SK-N-SH (cell line): ENCODE measurements at regions of chr17 and their contacts with region 1.

Region 1: GRCh38 chr17:79305768-79306423 is 231.3 kb downstream of the ENGASE start:
- DNase-seq: peak; percentile 95
- H3K4me3 ChIP-seq: no peak overlapping the region
- H3K27ac ChIP-seq: peak overlapping the region in 1 of 2 experiments; percentile 91; a peak in 2 of 4 replicates
- H3K4me1 ChIP-seq: peaks cover 0 to 24% of the 10 kb centered on the region in 2 experiments; a peak in 2 of 4 replicates
- H3K27me3 ChIP-seq: 0 out of 2 replicates have a peak, but pooled peaks cover 9% of the 10 kb centered on the region
- CTCF ChIP-seq: no peak
- EP300 ChIP-seq: peak in 1 of 2 experiments; percentile 65; a peak in 2 of 4 replicates
- RAD21 ChIP-seq: no peak

Region 2: GRCh38 chr17:79154951-79155585 is 150.8 kb before region 1 on chr17:
- CTCF ChIA-PET with region 1: no interaction called
- POLR2A ChIA-PET with region 1: no interaction called
- DNase-seq: peak; percentile 71
- H3K4me3 ChIP-seq: no peak overlapping the region
- H3K27ac ChIP-seq: no peak overlapping the region
- H3K4me1 ChIP-seq: peaks cover 0 to 11% of the 10 kb centered on the region in 2 experiments; a peak in 1 of 4 replicates
- H3K27me3 ChIP-seq: peaks cover 31% of the 10 kb centered on the region
- CTCF ChIP-seq: no peak
- EP300 ChIP-seq: no peak
- RAD21 ChIP-seq: no peak

Region 3: DNA sequence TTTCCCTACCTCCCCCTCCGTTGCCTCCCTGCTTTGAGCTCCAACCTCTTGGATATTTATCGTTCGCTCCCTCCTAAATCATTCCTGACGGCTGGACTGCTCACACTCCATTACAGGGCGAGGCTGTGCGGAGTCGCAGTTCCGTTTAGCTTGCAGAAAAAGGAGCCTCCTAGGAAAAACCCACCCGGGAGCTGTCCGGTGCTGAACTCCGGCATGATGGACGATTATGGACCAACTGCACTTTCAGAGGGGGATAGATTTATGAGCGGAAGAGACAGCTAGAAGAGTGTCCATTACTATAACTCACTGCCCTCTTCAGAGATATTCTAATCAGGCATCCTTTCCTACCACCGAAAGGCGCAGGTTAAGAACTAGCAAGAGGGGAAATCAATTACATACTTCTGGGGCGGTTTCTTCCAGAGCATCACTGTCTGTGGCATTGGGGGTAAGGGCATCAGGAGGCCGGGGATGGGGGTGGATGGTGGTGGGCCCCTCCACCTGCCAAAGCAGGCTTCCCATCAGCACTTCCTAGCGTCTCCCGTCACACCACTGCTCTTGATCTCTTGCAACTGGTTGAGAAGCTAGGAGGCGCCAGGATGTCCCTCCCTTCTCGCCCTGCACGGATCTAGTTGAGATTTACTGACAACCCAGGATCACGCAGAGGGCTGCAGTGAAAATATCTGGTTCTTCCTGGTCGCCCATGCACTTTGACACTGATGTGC is 20.0 kb after region 1 on chr17:
- CTCF ChIA-PET with region 1: interaction called, 14 read pairs
- POLR2A ChIA-PET with region 1: no interaction called
- DNase-seq: no peak
- H3K4me3 ChIP-seq: no peak overlapping the region
- H3K27ac ChIP-seq: no peak overlapping the region
- H3K4me1 ChIP-seq: no peaks in the 10 kb centered on the region; a peak in 1 of 4 replicates
- H3K27me3 ChIP-seq: no peaks in the 10 kb centered on the region
- CTCF ChIP-seq: no peak
- EP300 ChIP-seq: no peak
- RAD21 ChIP-seq: no peak

Region 4: DNA sequence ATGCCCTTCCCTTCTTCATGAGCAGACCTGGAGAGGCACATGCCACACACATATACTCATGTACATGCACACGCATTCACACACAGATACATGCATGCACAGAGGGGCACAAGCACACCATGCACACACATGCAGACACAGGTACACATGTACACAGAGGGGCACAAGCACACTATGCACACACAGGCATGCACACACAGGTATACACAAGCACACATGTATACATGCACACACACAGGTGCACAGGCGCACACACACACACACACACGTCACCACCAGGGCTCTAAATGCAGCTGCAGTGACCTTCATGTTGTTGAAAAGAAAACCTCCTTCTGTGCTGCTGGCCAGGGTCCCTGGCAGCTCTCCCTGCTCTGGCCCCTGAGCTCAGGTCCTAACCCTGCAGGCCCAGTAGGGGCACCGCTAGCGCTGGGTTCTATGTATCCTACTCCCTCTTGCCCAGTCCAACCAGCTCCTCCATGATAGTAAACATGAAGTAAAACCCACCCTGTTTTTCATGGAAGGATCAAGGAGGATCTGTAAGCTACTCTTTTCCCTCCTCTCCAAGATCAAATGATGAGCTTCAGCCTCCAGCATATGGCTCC is 132.1 kb after region 1 on chr17:
- CTCF ChIA-PET with region 1: no interaction called
- POLR2A ChIA-PET with region 1: no interaction called
- DNase-seq: peak; percentile 57
- H3K4me3 ChIP-seq: no peak overlapping the region
- H3K27ac ChIP-seq: no peak overlapping the region
- H3K4me1 ChIP-seq: no peaks in the 10 kb centered on the region
- H3K27me3 ChIP-seq: no peaks in the 10 kb centered on the region
- CTCF ChIP-seq: no peak
- EP300 ChIP-seq: no peak
- RAD21 ChIP-seq: no peak